Activated naive CD4-positive, alpha-beta T cell treated with anti-CD3 and anti-CD28 coated beads for 36 hours (primary cell): ENCODE measurements at regions of chr1 and their contacts with region 1.

Region 1: DNA sequence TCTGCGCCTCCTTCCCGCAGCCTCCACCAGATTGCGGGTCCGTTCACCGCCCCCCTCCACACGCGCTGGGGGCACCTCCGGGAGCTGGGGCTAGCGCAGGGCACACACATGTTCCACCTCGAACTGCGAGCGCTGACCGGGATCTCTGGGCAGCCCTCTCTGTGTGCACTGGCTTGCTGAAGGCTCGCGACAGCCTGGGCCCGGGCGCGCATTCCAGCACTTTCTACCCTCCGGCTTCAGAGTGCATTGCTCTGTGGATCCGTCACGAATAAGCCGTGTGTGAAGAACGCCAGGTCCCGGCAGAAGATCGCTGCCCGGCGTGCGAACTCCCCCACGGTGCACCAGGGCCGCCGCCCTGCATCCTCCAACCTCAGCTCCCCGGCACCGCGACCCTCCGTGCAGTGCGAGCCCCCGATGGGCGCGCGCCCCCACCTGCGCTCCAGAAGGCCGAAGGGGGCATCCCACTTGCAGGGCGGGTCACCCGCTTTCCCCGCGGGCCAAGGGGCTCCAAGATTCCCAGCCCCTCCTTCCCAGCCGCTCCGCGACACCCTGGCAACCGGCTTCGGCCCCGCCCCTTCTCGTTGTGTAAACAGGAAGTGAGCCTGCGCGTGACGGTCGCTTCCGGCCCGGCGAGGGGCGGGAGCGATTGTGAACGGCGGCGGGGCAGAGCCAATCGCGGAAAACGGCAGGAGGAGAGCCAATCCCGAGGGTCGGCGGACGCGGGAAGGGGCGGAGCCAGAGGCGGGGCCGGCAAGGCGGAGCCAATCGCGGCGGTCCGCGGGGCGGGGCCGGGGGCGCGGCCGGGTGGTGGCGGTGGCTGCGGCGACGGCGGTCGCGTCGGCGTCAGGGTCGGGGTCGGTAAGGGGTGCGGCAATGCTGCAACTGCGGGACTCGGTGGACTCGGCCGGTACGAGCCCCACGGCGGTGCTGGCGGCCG is at the start of gene TPRG1L:
- DNase-seq: peak; percentile 98
- H3K4me3 Mint-ChIP-seq: peak within 1 kb of the TSS; percentile 90
- H3K27ac Mint-ChIP-seq: peak within 1 kb of the TSS; percentile 66
- H3K4me1 Mint-ChIP-seq: peaks cover 28% of the 10 kb centered on the region
- H3K27me3 Mint-ChIP-seq: no peaks in the 10 kb centered on the region
- total RNA-seq, gene TPRG1L: 6.8 TPM

Region 2: GRCh38 chr1:3649342-3650247 is 25.1 kb after region 1 on chr1 and contains the start of gene WRAP73:
- CTCF ChIA-PET with region 1: interaction called, 5 read pairs
- intact Hi-C with region 1: loop called (anchors 1 kb)
- DNase-seq: peak; percentile 95
- H3K4me3 Mint-ChIP-seq: peak within 1 kb of the TSS; percentile 76
- H3K27ac Mint-ChIP-seq: no peak within 1 kb of the TSS
- H3K4me1 Mint-ChIP-seq: peaks cover 22% of the 10 kb centered on the region
- H3K27me3 Mint-ChIP-seq: peaks cover 24% of the 10 kb centered on the region
- total RNA-seq, gene WRAP73: 32.4 to 35.4 TPM

Region 3: DNA sequence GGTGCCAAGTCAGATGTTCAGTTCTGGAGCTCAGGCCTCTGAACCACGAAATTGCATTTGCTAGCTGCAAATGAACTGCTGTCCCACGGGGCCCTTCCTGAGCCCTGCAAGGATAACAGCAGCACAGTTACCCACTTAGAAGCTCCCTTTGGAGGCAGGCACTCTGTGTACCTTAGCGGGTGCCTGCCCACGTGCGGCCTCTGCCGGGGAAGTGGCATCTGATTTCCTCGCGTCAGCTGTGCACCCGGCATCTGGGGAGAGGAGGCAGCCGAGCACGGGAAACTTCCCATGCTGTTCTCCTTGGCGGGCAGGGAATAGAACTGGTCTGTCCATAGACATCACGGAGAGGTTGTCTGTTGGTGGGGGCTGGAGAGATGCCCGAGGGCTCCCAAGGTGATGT is 423.6 kb after region 1 on chr1:
- CTCF ChIA-PET with region 1: no interaction called
- intact Hi-C with region 1: no loop called
- DNase-seq: no peak
- H3K4me3 Mint-ChIP-seq: no peak overlapping the region
- H3K27ac Mint-ChIP-seq: no peak overlapping the region
- H3K4me1 Mint-ChIP-seq: peaks cover 11% of the 10 kb centered on the region
- H3K27me3 Mint-ChIP-seq: no peaks in the 10 kb centered on the region